CD8-positive, alpha-beta T cell (primary cell): ENCODE measurements at regions of chr13 and their contacts with region 1.

Region 1: DNA sequence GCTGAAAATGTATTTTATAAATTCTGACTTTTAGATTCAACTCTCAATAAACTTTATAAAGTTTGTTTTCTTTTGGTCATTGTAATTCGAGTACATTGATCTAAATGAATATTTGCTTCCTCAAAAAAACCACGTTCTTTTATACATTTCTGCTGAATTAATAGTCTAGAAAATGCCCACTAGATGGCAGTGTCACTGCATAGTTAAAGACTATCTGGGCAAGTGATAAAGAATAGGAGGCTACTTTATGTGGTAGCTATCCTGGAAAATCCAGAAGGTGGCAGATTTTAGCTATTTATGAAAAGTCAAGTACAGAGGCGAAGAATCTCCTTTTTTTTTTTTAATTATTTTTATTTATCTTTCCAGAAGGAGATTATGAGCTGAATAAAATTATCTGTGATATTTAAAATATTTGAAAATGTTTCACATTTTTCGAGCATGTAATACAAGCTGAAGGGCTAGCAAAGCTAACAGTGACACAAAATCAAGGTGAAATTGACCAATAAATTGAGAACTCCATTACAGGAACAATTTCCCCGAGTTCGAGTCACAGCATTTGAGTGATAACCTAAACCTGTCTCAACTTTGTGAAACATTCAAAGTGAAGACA is 221.8 kb downstream of the OLFM4 start:
- DNase-seq: peak in 2 of 9 experiments; percentile 38 to 50
- ATAC-seq: no peak
- H3K4me3 ChIP-seq: no peak overlapping the region
- H3K4me3 Mint-ChIP-seq: no peak overlapping the region
- H3K27ac ChIP-seq: no peak overlapping the region
- H3K27ac Mint-ChIP-seq: no peak overlapping the region
- H3K4me1 ChIP-seq: no peaks in the 10 kb centered on the region
- H3K4me1 Mint-ChIP-seq: no peaks in the 10 kb centered on the region
- H3K27me3 ChIP-seq: no peaks in the 10 kb centered on the region
- H3K27me3 Mint-ChIP-seq: no peaks in the 10 kb centered on the region
- CTCF ChIP-seq: peak; percentile 85

Region 2: GRCh38 chr13:53238261-53238660 is 12.1 kb before region 1 on chr13:
- CTCF ChIA-PET with region 1: interaction called, 11 read pairs
- POLR2A ChIA-PET with region 1: no interaction called
- intact Hi-C with region 1: no loop called
- DNase-seq: no peak
- ATAC-seq: no peak
- H3K4me3 ChIP-seq: no peak overlapping the region
- H3K4me3 Mint-ChIP-seq: no peak overlapping the region
- H3K27ac ChIP-seq: no peak overlapping the region
- H3K27ac Mint-ChIP-seq: no peak overlapping the region
- H3K4me1 ChIP-seq: no peaks in the 10 kb centered on the region
- H3K4me1 Mint-ChIP-seq: no peaks in the 10 kb centered on the region
- H3K27me3 ChIP-seq: no peaks in the 10 kb centered on the region
- H3K27me3 Mint-ChIP-seq: no peaks in the 10 kb centered on the region
- CTCF ChIP-seq: no peak

Region 3: DNA sequence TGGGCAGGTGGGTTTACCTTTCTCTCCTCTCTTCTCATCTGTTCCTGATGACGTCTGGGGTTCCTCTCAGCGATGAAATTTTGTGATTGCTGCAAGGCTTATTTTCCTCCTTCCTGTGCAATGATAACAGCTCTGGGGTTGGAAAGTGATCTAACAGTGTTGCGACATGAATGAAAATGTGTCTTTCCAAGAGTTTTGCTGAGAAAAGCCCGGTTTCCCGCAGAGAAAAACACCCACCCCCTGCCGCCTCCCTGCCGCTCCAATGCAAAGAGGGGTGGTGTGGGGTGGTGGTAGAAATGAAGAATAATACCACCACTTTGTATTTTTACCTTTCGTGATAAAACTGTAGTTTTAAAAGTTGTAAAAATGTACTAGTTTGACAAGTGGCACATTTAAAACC is 10.2 kb after region 1 on chr13:
- CTCF ChIA-PET with region 1: interaction called, 22 read pairs
- POLR2A ChIA-PET with region 1: no interaction called
- intact Hi-C with region 1: no loop called
- DNase-seq: no peak
- ATAC-seq: no peak
- H3K4me3 ChIP-seq: no peak overlapping the region
- H3K4me3 Mint-ChIP-seq: no peak overlapping the region
- H3K27ac ChIP-seq: no peak overlapping the region
- H3K27ac Mint-ChIP-seq: no peak overlapping the region
- H3K4me1 ChIP-seq: no peaks in the 10 kb centered on the region
- H3K4me1 Mint-ChIP-seq: no peaks in the 10 kb centered on the region
- H3K27me3 ChIP-seq: no peaks in the 10 kb centered on the region
- H3K27me3 Mint-ChIP-seq: no peaks in the 10 kb centered on the region
- CTCF ChIP-seq: no peak